CD8-positive, alpha-beta memory T cell (primary cell): ENCODE measurements at regions of chr10 and their contacts with region 1.

Region 1: GRCh38 chr10:30783939-30784500 is 154.5 kb upstream of the LYZL2 start:
- DNase-seq: peak; percentile 73 to 90 (median 80)
- H3K4me3 ChIP-seq: peak overlapping the region; percentile 77
- H3K4me3 Mint-ChIP-seq: peak overlapping the region; percentile 81 to 91 (median 86)
- H3K27ac ChIP-seq: no peak overlapping the region
- H3K27ac Mint-ChIP-seq: peak overlapping the region; percentile 49 to 97 (median 92)
- H3K4me1 ChIP-seq: peaks cover 5% of the 10 kb centered on the region
- H3K4me1 Mint-ChIP-seq: peaks cover 17 to 28% (median 23%) of the 10 kb centered on the region in 3 donors
- H3K27me3 ChIP-seq: no peaks in the 10 kb centered on the region
- H3K27me3 Mint-ChIP-seq: peaks cover 0 to 1% of the 10 kb centered on the region in 2 donors

Region 2: DNA sequence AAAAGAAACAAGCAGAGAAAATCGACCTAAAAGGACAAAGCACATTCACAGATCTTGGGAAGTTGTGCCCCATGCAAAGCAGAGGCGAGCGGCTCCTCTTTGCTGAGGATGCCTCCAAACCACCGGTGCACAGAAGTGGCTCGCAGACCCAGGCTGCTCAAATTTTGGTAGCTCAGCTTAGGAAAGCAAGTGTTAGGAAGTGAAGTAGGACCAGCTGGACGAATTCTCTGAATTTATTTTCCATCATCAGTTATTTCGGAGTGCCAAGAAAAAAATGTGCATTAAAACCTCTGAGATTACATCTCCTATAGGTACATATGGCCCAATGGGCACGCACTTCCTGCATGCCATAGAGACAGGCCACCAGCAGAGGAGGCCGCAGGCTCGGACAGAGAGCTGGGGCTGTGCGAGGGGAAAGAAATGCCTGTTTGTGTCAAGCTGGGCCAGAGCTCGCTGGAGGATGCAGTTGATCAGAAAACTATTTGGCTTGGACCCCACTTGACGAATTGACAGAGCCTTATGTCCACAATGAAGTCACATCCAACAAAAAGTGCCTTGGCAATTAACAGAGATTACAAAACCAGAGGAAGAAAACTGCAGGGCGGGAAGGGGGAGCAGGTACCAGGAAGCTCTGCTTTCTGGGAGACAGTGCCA is 32.2 kb before region 1 on chr10:
- CTCF ChIA-PET with region 1: interaction called, 42 read pairs
- POLR2A ChIA-PET with region 1: no interaction called
- DNase-seq: peak; percentile 47 to 82 (median 63)
- H3K4me3 ChIP-seq: no peak overlapping the region
- H3K4me3 Mint-ChIP-seq: peak overlapping the region in 6 of 7 donors; percentile 26 to 59 (median 47)
- H3K27ac ChIP-seq: no peak overlapping the region
- H3K27ac Mint-ChIP-seq: peak overlapping the region in 6 of 8 donors; percentile 49 to 89 (median 77)
- H3K4me1 ChIP-seq: peaks cover 14% of the 10 kb centered on the region
- H3K4me1 Mint-ChIP-seq: peaks cover 48 to 53% (median 48%) of the 10 kb centered on the region in 3 donors
- H3K27me3 ChIP-seq: no peaks in the 10 kb centered on the region
- H3K27me3 Mint-ChIP-seq: peaks cover 0 to 5% of the 10 kb centered on the region in 2 donors

Region 3: GRCh38 chr10:30812018-30812851 is 28.2 kb after region 1 on chr10:
- CTCF ChIA-PET with region 1: interaction called, 11 read pairs
- POLR2A ChIA-PET with region 1: interaction called, 11 read pairs
- DNase-seq: no peak
- H3K4me3 ChIP-seq: no peak overlapping the region
- H3K4me3 Mint-ChIP-seq: peak overlapping the region in 5 of 7 donors; percentile 36 to 60 (median 57)
- H3K27ac ChIP-seq: no peak overlapping the region
- H3K27ac Mint-ChIP-seq: peak overlapping the region in 3 of 8 donors; percentile 44 to 83 (median 67)
- H3K4me1 ChIP-seq: peaks cover 4% of the 10 kb centered on the region
- H3K4me1 Mint-ChIP-seq: peaks cover 26 to 30% (median 28%) of the 10 kb centered on the region in 3 donors
- H3K27me3 ChIP-seq: no peaks in the 10 kb centered on the region
- H3K27me3 Mint-ChIP-seq: no peaks in the 10 kb centered on the region

Region 4: GRCh38 chr10:30902621-30903396 is 118.8 kb after region 1 on chr10:
- CTCF ChIA-PET with region 1: no interaction called
- POLR2A ChIA-PET with region 1: no interaction called
- DNase-seq: no peak
- H3K4me3 ChIP-seq: no peak overlapping the region
- H3K4me3 Mint-ChIP-seq: no peak overlapping the region
- H3K27ac ChIP-seq: no peak overlapping the region
- H3K27ac Mint-ChIP-seq: peak overlapping the region in 1 of 8 donors; percentile 35
- H3K4me1 ChIP-seq: no peaks in the 10 kb centered on the region
- H3K4me1 Mint-ChIP-seq: no peaks in the 10 kb centered on the region
- H3K27me3 ChIP-seq: no peaks in the 10 kb centered on the region
- H3K27me3 Mint-ChIP-seq: no peaks in the 10 kb centered on the region

Region 5: DNA sequence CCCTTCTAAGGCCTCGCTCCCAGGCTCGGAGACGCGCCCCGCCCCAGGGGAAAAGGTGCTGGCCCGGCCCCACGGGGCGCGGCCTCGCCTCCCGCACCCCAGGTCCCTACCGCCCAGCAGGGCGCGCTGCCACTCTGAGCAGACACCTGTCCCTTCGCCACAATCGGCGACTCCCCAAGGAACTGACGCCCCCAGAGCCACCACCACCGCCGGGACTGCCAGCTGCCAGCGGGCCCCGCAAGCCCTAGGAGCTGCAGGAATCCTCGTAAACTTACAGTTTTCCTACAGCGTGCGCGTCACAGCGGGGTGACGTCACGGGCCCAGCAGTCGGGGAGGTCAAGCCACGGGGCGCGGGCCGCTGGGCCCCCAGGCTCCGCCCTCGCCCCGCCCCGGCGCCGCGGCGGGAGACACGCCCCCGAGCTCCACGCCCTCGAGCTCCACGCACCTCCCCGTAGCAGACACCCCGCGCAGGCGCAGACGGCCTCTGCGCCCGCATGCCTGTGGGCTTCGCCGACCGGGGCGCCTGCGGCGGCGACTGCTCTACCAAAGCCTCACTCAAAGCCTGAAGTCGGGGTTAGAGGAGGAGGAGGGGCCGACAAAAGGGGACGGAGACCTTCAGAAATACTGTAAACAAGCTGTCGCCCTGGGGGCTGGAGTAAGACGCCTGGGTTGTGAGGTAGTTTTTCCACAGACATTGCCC is 247.7 kb after region 1 on chr10 and contains the start of gene ZNF438:
- CTCF ChIA-PET with region 1: interaction called, 33 read pairs
- POLR2A ChIA-PET with region 1: interaction called, 21 read pairs
- DNase-seq: peak; percentile 92 to 97 (median 96)
- H3K4me3 ChIP-seq: peak within 1 kb of the TSS; percentile 93
- H3K4me3 Mint-ChIP-seq: peak within 1 kb of the TSS; percentile 83 to 95 (median 91)
- H3K27ac ChIP-seq: peak within 1 kb of the TSS; percentile 97
- H3K27ac Mint-ChIP-seq: peak within 1 kb of the TSS; percentile 96 to 99 (median 98)
- H3K4me1 ChIP-seq: peaks cover 14% of the 10 kb centered on the region
- H3K4me1 Mint-ChIP-seq: peaks cover 12 to 26% (median 19%) of the 10 kb centered on the region in 3 donors
- H3K27me3 ChIP-seq: no peaks in the 10 kb centered on the region
- H3K27me3 Mint-ChIP-seq: no peaks in the 10 kb centered on the region
- total RNA-seq, gene ZNF438: 2.9 to 3.9 TPM

Region 6: GRCh38 chr10:31490858-31491504 is 707.0 kb after region 1 on chr10:
- CTCF ChIA-PET with region 1: interaction called, 13 read pairs
- POLR2A ChIA-PET with region 1: no interaction called
- DNase-seq: peak in 1 of 5 donors; percentile 24
- H3K4me3 ChIP-seq: no peak overlapping the region
- H3K4me3 Mint-ChIP-seq: no peak overlapping the region
- H3K27ac ChIP-seq: no peak overlapping the region
- H3K27ac Mint-ChIP-seq: peak overlapping the region in 2 of 8 donors; percentile 29 to 35
- H3K4me1 ChIP-seq: no peaks in the 10 kb centered on the region
- H3K4me1 Mint-ChIP-seq: peaks cover 9 to 11% (median 9%) of the 10 kb centered on the region in 3 donors
- H3K27me3 ChIP-seq: no peaks in the 10 kb centered on the region
- H3K27me3 Mint-ChIP-seq: no peaks in the 10 kb centered on the region

Region 7: GRCh38 chr10:31759799-31760626 is 976.0 kb after region 1 on chr10:
- CTCF ChIA-PET with region 1: no interaction called
- POLR2A ChIA-PET with region 1: interaction called, 10 read pairs
- DNase-seq: peak; percentile 92 to 98 (median 94)
- H3K4me3 ChIP-seq: peak overlapping the region; percentile 89
- H3K4me3 Mint-ChIP-seq: peak overlapping the region; percentile 34 to 91 (median 86)
- H3K27ac ChIP-seq: peak overlapping the region; percentile 87
- H3K27ac Mint-ChIP-seq: peak overlapping the region; percentile 76 to 99 (median 98)
- H3K4me1 ChIP-seq: peaks cover 12% of the 10 kb centered on the region
- H3K4me1 Mint-ChIP-seq: peaks cover 14 to 23% (median 19%) of the 10 kb centered on the region in 3 donors
- H3K27me3 ChIP-seq: no peaks in the 10 kb centered on the region
- H3K27me3 Mint-ChIP-seq: no peaks in the 10 kb centered on the region

Region 8: DNA sequence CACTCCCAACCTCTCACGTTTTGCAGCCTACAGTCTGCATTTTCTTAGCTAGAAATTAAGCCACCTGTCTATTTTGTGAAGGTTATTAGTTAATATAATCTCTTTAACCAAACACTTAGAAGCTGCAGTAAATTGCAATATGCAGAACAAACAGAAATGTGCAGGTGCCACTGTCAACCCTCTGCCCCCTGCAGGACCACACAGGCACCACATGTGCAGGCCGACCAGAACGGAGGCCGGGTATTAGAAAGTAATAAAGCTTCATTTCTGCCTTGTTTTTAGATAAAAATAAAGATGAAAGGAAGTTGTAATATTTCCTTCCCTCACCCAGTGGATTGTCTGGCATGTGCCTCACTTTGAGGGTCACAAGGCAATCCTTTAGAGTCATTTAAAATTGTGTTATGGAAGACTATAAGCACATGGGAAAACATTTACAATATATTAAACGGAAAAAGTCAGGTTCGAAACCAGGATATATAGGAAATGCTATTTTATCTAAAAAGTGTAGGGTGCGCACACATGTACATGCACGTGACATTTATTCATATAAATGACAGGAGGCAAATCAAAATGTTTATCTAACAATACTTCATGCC is 986.4 kb after region 1 on chr10:
- CTCF ChIA-PET with region 1: interaction called, 35 read pairs
- POLR2A ChIA-PET with region 1: no interaction called
- DNase-seq: peak; percentile 34 to 70 (median 40)
- H3K4me3 ChIP-seq: no peak overlapping the region
- H3K4me3 Mint-ChIP-seq: no peak overlapping the region
- H3K27ac ChIP-seq: no peak overlapping the region
- H3K27ac Mint-ChIP-seq: no peak overlapping the region
- H3K4me1 ChIP-seq: no peaks in the 10 kb centered on the region
- H3K4me1 Mint-ChIP-seq: no peaks in the 10 kb centered on the region
- H3K27me3 ChIP-seq: no peaks in the 10 kb centered on the region
- H3K27me3 Mint-ChIP-seq: no peaks in the 10 kb centered on the region